CD4-positive, alpha-beta T cell (primary cell): ENCODE measurements at regions of chr17 and their contacts with region 1.

Region 1: GRCh38 chr17:45317112-45317928 is 500 bp upstream of the MAP3K14 start:
- DNase-seq: peak; percentile 93 to 100 (median 100)
- ATAC-seq: peak; percentile 83
- H3K4me3 ChIP-seq: peak overlapping the region; percentile 88
- H3K4me3 Mint-ChIP-seq: peak overlapping the region; percentile 98
- H3K27ac ChIP-seq: peak overlapping the region; percentile 51 to 79
- H3K27ac Mint-ChIP-seq: peak overlapping the region; percentile 85
- H3K4me1 ChIP-seq: peaks cover 81% of the 10 kb centered on the region
- H3K4me1 Mint-ChIP-seq: peaks cover 88% of the 10 kb centered on the region
- H3K27me3 ChIP-seq: no peaks in the 10 kb centered on the region
- H3K27me3 Mint-ChIP-seq: no peaks in the 10 kb centered on the region
- CTCF ChIP-seq: no peak

Region 2: DNA sequence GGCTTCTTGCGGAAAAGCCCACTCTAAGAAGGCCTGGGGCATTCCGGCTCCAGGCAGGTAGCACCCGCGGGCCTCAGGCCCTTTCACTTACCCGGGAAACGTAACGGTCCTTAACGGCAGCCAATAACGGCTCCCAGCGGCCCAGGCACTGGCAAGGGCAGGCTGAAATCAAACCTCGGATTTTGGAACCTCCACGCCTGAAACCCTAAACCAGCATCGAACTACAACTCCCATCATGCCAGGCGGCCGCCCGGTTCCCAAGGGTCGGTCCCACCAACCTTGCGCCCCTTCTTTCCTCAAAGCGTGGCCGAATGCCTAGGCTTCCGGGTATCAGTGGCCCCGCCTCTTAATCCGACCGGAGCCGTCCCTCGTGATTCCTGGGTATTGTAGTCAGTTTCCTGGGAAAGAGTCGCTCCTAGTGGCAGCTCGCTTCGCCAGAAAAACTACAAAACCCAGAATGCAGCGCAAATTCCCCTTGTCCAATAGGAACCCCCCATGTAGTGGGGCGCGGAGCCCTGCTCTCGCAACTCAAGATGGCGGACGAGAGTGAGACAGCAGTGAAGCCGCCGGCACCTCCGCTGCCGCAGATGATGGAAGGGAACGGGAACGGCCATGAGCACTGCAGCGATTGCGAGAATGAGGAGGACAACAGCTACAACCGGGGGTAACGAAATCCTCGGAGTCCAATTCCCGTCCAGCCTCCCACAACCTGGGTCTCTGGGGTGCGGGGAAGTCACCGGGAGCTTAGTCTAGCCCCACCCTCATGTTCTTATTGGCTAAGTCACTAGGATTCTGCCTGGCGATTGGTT is 256.3 kb before region 1 on chr17 and contains the start of gene NMT1:
- CTCF ChIA-PET with region 1: no interaction called
- POLR2A ChIA-PET with region 1: interaction called, 9 read pairs
- intact Hi-C with region 1: loop called in 1 of 2 experiments (anchors 5 kb)
- DNase-seq: peak; percentile 87 to 99 (median 92)
- ATAC-seq: peak; percentile 89
- H3K4me3 ChIP-seq: peak within 1 kb of the TSS; percentile 72
- H3K4me3 Mint-ChIP-seq: peak within 1 kb of the TSS; percentile 100
- H3K27ac ChIP-seq: peak within 1 kb of the TSS; percentile 80 to 87
- H3K27ac Mint-ChIP-seq: peak within 1 kb of the TSS; percentile 92
- H3K4me1 ChIP-seq: peaks cover 50% of the 10 kb centered on the region
- H3K4me1 Mint-ChIP-seq: peaks cover 55% of the 10 kb centered on the region
- H3K27me3 ChIP-seq: no peaks in the 10 kb centered on the region
- H3K27me3 Mint-ChIP-seq: no peaks in the 10 kb centered on the region
- CTCF ChIP-seq: no peak
- total RNA-seq, gene NMT1: 61.1 to 62.2 TPM

Region 3: DNA sequence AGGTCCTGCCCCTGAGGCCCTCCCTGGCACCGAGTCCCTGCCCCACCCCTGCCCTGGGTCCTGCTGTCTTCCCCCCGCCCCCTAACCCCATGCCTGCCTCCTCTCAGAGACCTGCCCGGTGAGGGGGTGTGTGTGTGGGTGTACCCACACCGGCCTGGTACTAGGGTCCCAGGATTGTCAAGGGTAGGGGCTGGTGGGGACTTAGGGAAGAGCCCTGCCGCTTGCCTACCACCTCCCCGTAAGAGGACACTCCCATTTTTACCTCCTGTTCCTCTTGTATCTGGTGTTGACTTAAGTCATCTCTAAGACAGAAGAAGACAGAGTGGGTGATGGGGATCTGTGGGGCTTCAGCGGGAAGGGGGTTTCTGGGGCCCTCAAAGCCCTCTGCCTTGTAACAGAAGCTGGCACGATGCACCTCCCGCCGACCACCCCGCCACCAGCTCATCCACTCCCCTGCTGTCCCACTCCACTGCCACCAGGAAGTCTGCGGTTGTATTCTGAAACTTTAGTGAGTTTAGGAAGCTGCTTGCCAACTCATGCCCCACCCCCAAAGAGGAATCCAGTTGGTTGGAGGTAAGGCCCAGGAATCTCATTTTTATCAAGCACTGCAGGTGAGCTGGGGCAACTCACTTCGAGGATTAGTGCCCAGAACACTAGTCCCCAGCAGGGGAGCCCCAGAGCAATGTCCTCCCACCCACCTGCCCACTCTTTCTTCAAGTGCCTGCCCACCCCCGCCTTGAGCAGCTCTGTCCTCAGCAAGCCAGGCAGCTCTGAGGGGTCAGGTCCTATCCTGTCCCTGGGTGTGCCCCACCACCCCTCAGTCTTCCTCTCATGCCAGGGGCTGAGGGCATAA is 61.0 kb before region 1 on chr17:
- CTCF ChIA-PET with region 1: no interaction called
- POLR2A ChIA-PET with region 1: no interaction called
- intact Hi-C with region 1: no loop called
- DNase-seq: peak in 1 of 14 experiments; percentile 36
- ATAC-seq: peak; percentile 69
- H3K4me3 ChIP-seq: no peak overlapping the region
- H3K4me3 Mint-ChIP-seq: peak overlapping the region; percentile 61
- H3K27ac ChIP-seq: peak overlapping the region in 1 of 2 donors; percentile 46
- H3K27ac Mint-ChIP-seq: peak overlapping the region; percentile 79
- H3K4me1 ChIP-seq: peaks cover 51% of the 10 kb centered on the region
- H3K4me1 Mint-ChIP-seq: peaks cover 72% of the 10 kb centered on the region
- H3K27me3 ChIP-seq: no peaks in the 10 kb centered on the region
- H3K27me3 Mint-ChIP-seq: no peaks in the 10 kb centered on the region
- CTCF ChIP-seq: peak; percentile 14

Region 4: GRCh38 chr17:45293413-45294211 is 23.7 kb before region 1 on chr17:
- CTCF ChIA-PET with region 1: interaction called, 12 read pairs
- POLR2A ChIA-PET with region 1: interaction called, 5 read pairs
- intact Hi-C with region 1: loop called in 1 of 2 experiments (anchors 2 kb)
- DNase-seq: peak in 3 of 14 experiments; percentile 44 to 65 (median 56)
- ATAC-seq: no peak
- H3K4me3 ChIP-seq: no peak overlapping the region
- H3K4me3 Mint-ChIP-seq: no peak overlapping the region
- H3K27ac ChIP-seq: no peak overlapping the region
- H3K27ac Mint-ChIP-seq: peak overlapping the region; percentile 75
- H3K4me1 ChIP-seq: peaks cover 53% of the 10 kb centered on the region
- H3K4me1 Mint-ChIP-seq: peaks cover 65% of the 10 kb centered on the region
- H3K27me3 ChIP-seq: no peaks in the 10 kb centered on the region
- H3K27me3 Mint-ChIP-seq: no peaks in the 10 kb centered on the region
- CTCF ChIP-seq: no peak

Region 5: DNA sequence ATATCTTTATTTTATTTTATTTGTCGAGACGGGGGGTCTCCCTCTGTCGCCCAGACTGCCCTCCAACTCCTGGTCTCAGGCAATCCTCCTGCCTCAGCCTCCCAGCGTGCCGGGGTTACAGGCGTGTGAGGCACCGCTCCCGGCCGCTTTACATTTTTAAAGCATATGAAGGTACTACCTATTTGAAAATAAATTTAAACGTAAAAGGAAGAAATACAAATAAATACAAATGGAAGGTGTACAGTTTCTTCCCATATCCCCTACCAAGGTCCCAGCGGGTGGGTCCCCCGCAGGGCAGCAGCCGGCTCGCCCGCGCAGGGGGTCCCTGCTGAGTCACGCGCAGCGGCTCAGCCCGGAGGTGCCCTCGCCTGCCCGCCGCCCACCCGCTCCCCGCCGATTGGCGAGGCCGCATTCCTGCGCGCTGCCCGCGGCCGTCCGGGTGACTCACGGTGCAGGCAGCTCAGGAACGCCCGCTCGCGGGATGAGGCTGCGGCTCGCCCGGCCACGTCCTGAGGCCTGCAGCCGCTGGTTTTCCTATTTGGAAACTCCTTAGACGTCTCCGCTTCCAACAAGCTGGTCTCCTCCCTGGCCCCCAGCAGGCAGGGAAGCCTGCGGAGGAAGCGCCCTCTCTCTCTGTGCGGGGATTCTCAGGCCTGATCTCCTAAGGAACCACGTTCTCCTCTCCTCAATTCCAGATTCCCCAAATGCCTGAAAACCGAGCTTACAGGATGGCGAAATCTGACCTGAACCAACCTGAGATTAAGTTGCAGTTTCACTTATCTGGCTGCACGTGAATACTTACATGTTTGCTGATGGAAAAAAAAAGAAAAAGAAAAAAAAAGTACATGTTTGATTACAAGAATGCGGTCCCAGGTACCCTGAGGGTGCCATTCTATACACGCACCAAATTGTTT is 54.4 kb after region 1 on chr17:
- CTCF ChIA-PET with region 1: no interaction called
- POLR2A ChIA-PET with region 1: interaction called, 10 read pairs
- intact Hi-C with region 1: no loop called
- DNase-seq: peak in 5 of 14 experiments; percentile 20 to 54 (median 44)
- ATAC-seq: no peak
- H3K4me3 ChIP-seq: no peak overlapping the region
- H3K4me3 Mint-ChIP-seq: peak overlapping the region; percentile 74
- H3K27ac ChIP-seq: no peak overlapping the region
- H3K27ac Mint-ChIP-seq: no peak overlapping the region
- H3K4me1 ChIP-seq: peaks cover 12% of the 10 kb centered on the region
- H3K4me1 Mint-ChIP-seq: peaks cover 13% of the 10 kb centered on the region
- H3K27me3 ChIP-seq: peaks cover 4 to 8% of the 10 kb centered on the region in 2 experiments
- H3K27me3 Mint-ChIP-seq: peaks cover 27% of the 10 kb centered on the region
- CTCF ChIP-seq: no peak

Region 6: GRCh38 chr17:45385331-45385997 is 68.1 kb after region 1 on chr17:
- CTCF ChIA-PET with region 1: interaction called, 11 read pairs
- POLR2A ChIA-PET with region 1: interaction called, 7 read pairs
- intact Hi-C with region 1: loop called (anchors 5 kb)
- DNase-seq: peak; percentile 77 to 97 (median 88)
- ATAC-seq: peak; percentile 97
- H3K4me3 ChIP-seq: no peak overlapping the region
- H3K4me3 Mint-ChIP-seq: no peak overlapping the region
- H3K27ac ChIP-seq: no peak overlapping the region
- H3K27ac Mint-ChIP-seq: no peak overlapping the region
- H3K4me1 ChIP-seq: peaks cover 10% of the 10 kb centered on the region
- H3K4me1 Mint-ChIP-seq: peaks cover 4% of the 10 kb centered on the region
- H3K27me3 ChIP-seq: no peaks in the 10 kb centered on the region
- H3K27me3 Mint-ChIP-seq: peaks cover 12% of the 10 kb centered on the region
- CTCF ChIP-seq: peak; percentile 95